ENCODE measurements at regions of chr10 and their contacts with region 1.

Region 1: DNA sequence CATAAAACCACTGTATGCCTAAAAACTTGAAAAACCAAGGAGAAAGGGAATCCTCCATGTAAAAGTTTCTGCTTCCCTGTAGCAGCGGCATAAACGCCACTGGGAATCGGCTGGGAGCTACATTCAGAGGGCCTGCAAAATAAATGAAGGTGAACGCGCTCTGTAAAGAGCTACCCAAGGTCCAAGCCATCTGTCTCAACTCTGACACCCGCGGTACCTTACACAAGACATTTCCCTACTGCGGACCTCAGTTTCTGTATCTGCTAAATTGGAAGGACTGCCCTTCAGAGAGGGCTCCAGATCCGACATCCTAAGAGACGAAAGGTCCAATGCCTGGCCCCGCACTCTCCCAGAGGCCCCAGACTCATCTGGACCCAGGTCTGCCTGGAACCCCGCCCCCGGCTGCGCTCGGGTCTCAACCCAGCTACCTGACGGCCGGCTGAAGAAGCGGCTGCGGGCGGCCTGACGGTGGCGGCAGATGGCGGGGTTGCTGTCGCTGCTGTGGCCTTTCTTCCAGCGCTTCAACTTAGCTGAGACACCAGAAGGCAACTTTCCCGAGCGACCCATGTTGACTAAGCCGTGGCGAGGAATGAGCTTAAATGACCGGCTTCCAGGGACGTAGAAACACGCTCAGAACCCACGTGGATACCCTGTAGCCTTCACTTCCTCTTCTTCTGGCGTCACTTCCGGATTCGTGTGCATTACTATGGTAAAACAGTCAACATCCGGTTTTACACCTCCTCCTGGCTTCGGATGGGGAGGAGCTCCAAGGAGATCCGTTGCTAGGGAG is at the start of gene RRP12:
- DNase-seq: peak; percentile 88
- H3K4me3 Mint-ChIP-seq: peak within 1 kb of the TSS; percentile 93
- H3K27ac Mint-ChIP-seq: peak within 1 kb of the TSS; percentile 92
- H3K4me1 Mint-ChIP-seq: peaks cover 20% of the 10 kb centered on the region
- H3K27me3 Mint-ChIP-seq: no peaks in the 10 kb centered on the region
- total RNA-seq, gene RRP12: 16.2 to 18.1 TPM

Region 2: DNA sequence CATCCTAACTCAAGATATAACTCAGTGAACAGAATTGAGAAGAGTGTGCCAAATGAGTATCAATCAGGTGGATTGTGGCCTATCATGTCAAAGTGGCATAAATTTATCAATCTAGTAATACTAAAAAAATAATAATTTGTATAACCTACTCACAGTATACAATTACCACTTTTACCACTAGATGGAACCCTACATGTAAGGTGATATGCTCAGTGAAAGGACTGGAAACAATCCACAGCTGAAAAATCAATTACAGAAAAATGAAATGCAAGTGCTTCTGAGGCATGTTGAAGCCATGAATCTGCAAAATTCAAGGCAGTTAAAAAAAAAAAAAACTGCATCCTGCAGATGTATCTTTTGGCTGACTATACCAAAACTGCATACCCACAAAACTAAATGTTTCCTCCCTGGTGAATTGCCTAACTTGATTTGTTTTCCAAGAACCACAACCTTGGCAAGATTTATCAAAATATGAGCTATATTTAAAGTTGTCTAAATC is 122.3 kb before region 1 on chr10:
- CTCF ChIA-PET with region 1: interaction called, 12 read pairs
- POLR2A ChIA-PET with region 1: interaction called, 4 read pairs
- DNase-seq: no peak
- H3K4me3 Mint-ChIP-seq: no peak overlapping the region
- H3K27ac Mint-ChIP-seq: no peak overlapping the region
- H3K4me1 Mint-ChIP-seq: peaks cover 14% of the 10 kb centered on the region
- H3K27me3 Mint-ChIP-seq: no peaks in the 10 kb centered on the region